PC-3 (cell line): ENCODE measurements at regions of chr10 and their contacts with region 1.

Region 1: DNA sequence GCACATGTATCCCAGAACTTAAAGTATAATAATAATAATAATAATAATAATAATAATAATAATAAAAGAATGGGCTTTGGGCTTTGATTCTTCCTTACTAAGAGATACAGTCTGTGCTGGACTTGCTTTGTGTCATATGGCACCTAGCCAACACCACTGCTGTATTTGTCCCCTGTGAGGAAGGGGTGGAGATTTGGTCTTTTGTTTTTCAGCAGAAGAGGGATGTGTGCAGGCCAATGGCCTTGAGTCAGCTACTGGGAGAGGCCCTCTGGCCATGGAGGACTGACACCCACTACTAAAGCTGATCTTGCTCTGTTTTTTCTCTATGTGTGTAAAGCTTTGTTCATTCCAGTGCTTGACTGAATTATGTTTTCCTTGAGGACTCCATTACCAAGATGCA is 573.0 kb upstream of the PCDH15 start:
- DNase-seq: no peak
- ATAC-seq: peak; percentile 20; the same call in 1 of the 2 replicates
- H3K4me3 ChIP-seq: no peak overlapping the region
- H3K27ac ChIP-seq: no peak overlapping the region
- H3K4me1 ChIP-seq: peaks cover 4% of the 10 kb centered on the region; the same call in 1 of the 2 replicates
- H3K27me3 ChIP-seq: no peaks in the 10 kb centered on the region
- CTCF ChIP-seq: no peak

Region 2: DNA sequence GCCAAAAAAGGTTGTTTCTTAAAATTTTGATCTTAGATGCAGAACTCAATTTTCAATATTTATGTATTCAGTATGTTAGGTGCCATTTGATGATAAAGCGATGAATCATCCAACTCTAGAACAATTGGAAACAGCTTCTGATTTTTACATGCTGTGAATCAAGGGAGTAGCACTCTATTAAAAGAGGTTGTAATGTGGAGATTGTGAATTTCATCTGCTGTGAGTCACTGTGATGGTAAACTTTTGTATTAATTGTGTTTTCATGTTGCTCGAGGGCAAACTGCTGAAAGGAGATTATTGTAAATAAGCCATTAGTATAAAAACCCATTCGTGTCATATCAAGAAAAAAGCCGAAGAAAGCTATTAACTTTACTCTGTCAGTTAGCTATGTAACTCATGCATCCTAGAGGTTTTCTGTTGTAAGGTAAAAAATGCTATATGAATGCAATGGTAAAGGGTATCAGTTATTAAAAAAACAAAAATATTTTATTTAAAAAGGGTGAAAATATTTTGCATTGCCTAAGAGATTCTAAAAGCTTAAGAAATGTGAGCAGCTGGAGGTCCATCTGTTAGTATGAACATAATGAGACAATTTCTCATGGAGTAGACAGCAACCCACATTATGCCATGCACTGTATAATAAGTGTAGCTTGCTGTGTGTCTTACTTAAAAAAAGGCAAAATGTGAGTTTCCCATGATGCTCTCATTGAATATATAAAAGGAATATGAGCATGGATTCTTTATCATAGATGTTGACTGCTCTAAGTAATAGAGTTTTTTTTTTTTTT is 62.0 kb before region 1 on chr10:
- CTCF ChIA-PET with region 1: no interaction called
- POLR2A ChIA-PET with region 1: no interaction called
- intact Hi-C with region 1: loop called (anchors 1 kb)
- DNase-seq: peak; percentile 59
- ATAC-seq: peak; percentile 90
- H3K4me3 ChIP-seq: no peak overlapping the region
- H3K27ac ChIP-seq: no peak overlapping the region
- H3K4me1 ChIP-seq: peaks cover 6% of the 10 kb centered on the region; the same call in 1 of the 2 replicates
- H3K27me3 ChIP-seq: no peaks in the 10 kb centered on the region
- CTCF ChIP-seq: no peak